ENCODE measurements at regions of chr12 and their contacts with region 1.

Region 1: GRCh38 chr12:10153271-10154144 is 18.4 kb downstream of the OLR1 start:
- DNase-seq: no peak
- H3K27ac ChIP-seq: no peak overlapping the region
- CTCF ChIP-seq: peak; percentile 64

Region 2: GRCh38 chr12:9940375-9940774 is 213.1 kb before region 1 on chr12:
- CTCF ChIA-PET with region 1: no interaction called
- POLR2A ChIA-PET with region 1: no interaction called
- DNase-seq: no peak
- H3K27ac ChIP-seq: no peak overlapping the region
- CTCF ChIP-seq: no peak

Region 3: GRCh38 chr12:9977916-9978315 is 175.6 kb before region 1 on chr12:
- CTCF ChIA-PET with region 1: no interaction called
- POLR2A ChIA-PET with region 1: no interaction called
- DNase-seq: no peak
- H3K27ac ChIP-seq: no peak overlapping the region
- CTCF ChIP-seq: no peak

Region 4: GRCh38 chr12:10082117-10082874 is 71.2 kb before region 1 on chr12:
- CTCF ChIA-PET with region 1: no interaction called
- POLR2A ChIA-PET with region 1: no interaction called
- DNase-seq: no peak
- H3K27ac ChIP-seq: no peak overlapping the region
- CTCF ChIP-seq: no peak

Region 5: DNA sequence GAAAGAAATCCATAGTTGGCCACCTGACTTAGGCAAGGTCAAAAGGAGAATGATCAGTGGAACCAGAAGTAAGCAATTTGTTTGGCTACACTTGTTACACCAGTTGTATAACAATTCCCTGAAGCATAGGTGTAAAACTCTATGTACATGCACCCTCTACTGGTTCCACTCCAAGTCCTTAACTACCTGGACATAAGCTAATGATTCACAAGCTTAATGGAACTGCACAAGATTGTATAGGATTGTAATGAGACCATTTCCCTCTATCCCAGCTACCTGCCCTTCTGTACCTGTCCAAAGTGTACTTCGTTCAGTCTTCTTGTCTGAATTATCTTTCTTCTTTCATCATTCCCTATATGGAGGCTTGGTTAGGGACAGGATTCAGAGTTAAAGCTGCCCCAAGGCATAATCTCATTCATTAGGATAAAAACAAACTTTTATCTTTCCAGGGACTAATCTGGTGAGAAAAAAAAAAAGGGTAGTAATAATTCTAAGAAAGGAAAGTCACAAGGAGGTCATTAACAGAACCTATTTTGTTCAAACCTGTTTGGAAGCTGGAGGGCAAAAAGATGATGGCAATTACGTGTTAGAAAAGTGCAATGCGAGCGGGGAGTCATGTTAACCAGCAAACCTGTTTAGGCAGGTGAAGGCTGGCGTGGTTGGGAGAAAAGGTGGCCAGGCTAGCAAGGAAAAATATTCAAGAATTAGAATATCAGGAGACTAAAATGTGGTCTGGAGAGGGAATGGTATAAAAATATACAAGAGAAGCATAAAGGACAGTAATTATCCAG is 22.5 kb after region 1 on chr12:
- CTCF ChIA-PET with region 1: interaction called, 11 read pairs
- POLR2A ChIA-PET with region 1: interaction called, 3 read pairs
- DNase-seq: peak; percentile 51
- H3K27ac ChIP-seq: no peak overlapping the region
- CTCF ChIP-seq: no peak

Region 6: DNA sequence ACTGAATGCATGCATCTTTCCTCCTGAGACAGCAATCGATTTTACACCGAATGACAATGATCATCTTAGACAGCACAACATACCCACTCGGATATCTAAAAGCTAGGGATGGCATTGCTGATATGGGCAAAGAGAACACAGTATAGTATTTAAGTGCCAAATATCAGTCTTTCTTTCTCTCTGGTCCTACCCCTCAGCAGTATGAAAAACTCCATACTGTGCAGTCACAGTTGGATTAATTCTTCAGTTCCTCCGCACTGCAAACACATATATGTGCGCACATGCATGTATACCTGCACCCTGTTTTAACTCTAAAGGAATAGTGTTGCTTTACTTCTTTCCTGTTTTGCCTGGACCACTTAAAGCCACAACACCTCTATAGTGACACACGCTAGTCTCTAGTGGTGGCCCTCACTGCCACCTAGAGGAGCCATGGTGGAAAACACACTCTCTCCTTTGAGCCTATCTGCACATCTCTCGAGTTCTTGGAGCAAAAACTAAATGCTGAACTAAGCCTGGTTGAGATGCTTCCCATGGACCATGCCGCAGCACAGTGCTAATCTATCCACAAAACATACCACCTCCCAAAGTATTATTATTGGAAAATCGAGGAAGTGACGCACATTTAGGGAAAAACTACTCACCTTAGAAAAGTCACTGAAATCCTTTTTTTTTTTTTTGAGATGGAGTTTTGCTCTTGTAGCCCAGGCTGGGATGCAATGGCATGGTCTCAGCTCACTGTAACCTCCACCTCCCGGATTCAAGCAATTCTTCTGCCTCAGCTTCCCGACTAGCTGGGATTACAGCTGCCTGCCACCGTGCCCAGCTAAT is 37.3 kb after region 1 on chr12:
- CTCF ChIA-PET with region 1: interaction called, 27 read pairs
- POLR2A ChIA-PET with region 1: no interaction called
- DNase-seq: peak; percentile 64
- H3K27ac ChIP-seq: no peak overlapping the region
- CTCF ChIP-seq: peak; percentile 53

Measured in RWPE1 (cell line).